ENCODE measurements at regions of chr3 and their contacts with region 1.

Region 1: GRCh38 chr3:24410861-24411260 is 83.8 kb downstream of the THRB start:
- DNase-seq: no peak
- H3K4me3 ChIP-seq: no peak overlapping the region
- H3K4me3 Mint-ChIP-seq: no peak overlapping the region
- H3K27ac Mint-ChIP-seq: no peak overlapping the region
- H3K4me1 ChIP-seq: no peaks in the 10 kb centered on the region
- H3K4me1 Mint-ChIP-seq: no peaks in the 10 kb centered on the region
- H3K27me3 ChIP-seq: no peaks in the 10 kb centered on the region
- H3K27me3 Mint-ChIP-seq: no peaks in the 10 kb centered on the region
- CTCF ChIP-seq: no peak

Region 2: GRCh38 chr3:24399614-24400013 is 11.2 kb before region 1 on chr3:
- CTCF ChIA-PET with region 1: no interaction called
- POLR2A ChIA-PET with region 1: no interaction called
- intact Hi-C with region 1: loop called (anchors 1 kb)
- DNase-seq: no peak
- H3K4me3 ChIP-seq: no peak overlapping the region
- H3K4me3 Mint-ChIP-seq: no peak overlapping the region
- H3K27ac Mint-ChIP-seq: no peak overlapping the region
- H3K4me1 ChIP-seq: peaks cover 7% of the 10 kb centered on the region; the same call in 1 of the 2 replicates
- H3K4me1 Mint-ChIP-seq: no peaks in the 10 kb centered on the region
- H3K27me3 ChIP-seq: no peaks in the 10 kb centered on the region
- H3K27me3 Mint-ChIP-seq: no peaks in the 10 kb centered on the region
- CTCF ChIP-seq: no peak

Region 3: DNA sequence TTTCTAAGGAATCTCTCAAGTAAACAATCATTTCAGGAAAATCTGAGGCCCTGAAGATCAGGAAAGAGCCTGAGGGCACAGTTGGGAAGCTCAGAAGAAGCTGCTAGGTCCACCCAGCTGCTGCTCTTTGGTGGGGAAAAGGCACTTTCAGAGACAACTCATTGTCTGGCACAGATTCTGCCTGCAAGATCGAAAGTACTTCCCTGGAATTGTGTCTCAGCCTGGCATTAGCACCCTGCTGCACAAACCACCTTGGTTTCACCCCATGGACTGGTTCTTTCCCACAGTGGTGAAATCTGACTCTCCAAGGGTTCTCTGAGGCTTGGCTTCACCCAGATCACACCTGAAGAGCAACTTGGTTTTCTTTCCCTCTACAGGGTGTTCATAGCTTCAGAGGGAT is 65.1 kb after region 1 on chr3:
- CTCF ChIA-PET with region 1: no interaction called
- POLR2A ChIA-PET with region 1: no interaction called
- intact Hi-C with region 1: no loop called
- DNase-seq: no peak
- H3K4me3 ChIP-seq: no peak overlapping the region
- H3K4me3 Mint-ChIP-seq: no peak overlapping the region
- H3K27ac Mint-ChIP-seq: no peak overlapping the region
- H3K4me1 ChIP-seq: peaks cover 7% of the 10 kb centered on the region; the same call in 1 of the 2 replicates
- H3K4me1 Mint-ChIP-seq: peaks cover 7% of the 10 kb centered on the region
- H3K27me3 ChIP-seq: no peaks in the 10 kb centered on the region
- H3K27me3 Mint-ChIP-seq: no peaks in the 10 kb centered on the region
- CTCF ChIP-seq: no peak

Measured in Caco-2 (cell line).